ENCODE measurements at regions of chrX and their contacts with region 1.

Region 1: GRCh38 chrX:11787564-11787963 is 29.5 kb downstream of the MSL3 start:
- DNase-seq: peak; percentile 79
- ATAC-seq: peak; percentile 80
- H3K4me3 Mint-ChIP-seq: peak overlapping the region; percentile 56
- H3K27ac Mint-ChIP-seq: no peak overlapping the region
- H3K4me1 Mint-ChIP-seq: peaks cover 32% of the 10 kb centered on the region
- H3K27me3 Mint-ChIP-seq: no peaks in the 10 kb centered on the region

Region 2: DNA sequence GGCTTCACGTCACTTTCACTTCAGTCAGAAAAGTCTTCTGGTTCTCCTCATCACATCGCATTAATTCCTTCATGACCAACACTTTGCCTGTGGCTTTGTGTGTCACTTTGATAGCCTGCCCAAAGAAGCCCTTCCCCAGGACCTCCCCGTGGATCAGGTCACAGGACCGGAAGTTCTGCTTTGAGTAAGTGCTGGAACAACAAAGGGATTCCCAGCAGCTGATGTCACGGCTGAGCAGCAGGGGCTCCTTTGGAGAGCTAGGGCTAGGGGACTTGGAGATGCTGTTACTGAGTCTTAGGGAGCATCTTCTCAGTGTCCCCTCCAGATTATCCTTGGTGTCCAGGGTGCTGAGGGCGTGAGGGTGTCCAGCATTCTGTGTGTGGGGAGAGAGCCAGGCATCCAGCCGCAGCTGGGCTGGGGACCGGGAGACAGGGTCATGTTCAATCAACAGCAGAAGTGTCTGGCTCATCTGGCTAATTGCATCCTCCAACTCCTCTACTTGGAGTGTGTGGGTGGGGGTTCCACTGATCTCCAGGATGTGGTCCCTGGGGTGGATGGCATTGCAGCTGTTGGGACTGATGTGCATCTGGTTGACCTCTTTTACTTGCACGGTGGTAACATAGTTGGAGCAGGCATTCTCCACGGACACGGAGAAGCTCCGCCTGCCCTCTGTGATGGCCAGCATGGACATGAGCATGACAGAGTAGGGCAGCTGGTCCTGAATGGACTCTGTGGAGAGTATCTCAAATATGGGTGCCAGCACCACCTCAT is 82.7 kb before region 1 on chrX:
- CTCF ChIA-PET with region 1: no interaction called
- POLR2A ChIA-PET with region 1: no interaction called
- DNase-seq: no peak
- ATAC-seq: no peak
- H3K4me3 Mint-ChIP-seq: no peak overlapping the region
- H3K27ac Mint-ChIP-seq: no peak overlapping the region
- H3K4me1 Mint-ChIP-seq: no peaks in the 10 kb centered on the region
- H3K27me3 Mint-ChIP-seq: no peaks in the 10 kb centered on the region

Region 3: DNA sequence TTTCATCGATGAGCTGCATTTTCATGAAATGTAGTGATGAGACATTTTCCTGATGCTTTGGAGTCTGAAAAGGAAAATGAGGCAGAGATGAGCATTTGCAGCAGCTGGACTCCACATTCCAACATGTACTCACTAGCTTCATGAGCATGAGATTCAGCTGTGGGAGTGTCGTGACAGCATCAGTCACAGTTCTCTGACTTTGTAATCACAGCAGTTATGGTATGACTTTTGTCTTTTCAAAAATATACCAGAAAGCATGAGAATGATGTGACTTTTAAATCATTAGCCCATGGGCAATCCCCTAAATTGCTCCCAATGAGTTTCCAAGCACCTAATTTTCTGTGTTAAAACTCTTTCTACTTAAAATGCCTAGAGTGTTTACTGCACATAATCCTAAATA is 47.8 kb before region 1 on chrX:
- CTCF ChIA-PET with region 1: no interaction called
- POLR2A ChIA-PET with region 1: no interaction called
- DNase-seq: no peak
- ATAC-seq: no peak
- H3K4me3 Mint-ChIP-seq: no peak overlapping the region
- H3K27ac Mint-ChIP-seq: no peak overlapping the region
- H3K4me1 Mint-ChIP-seq: no peaks in the 10 kb centered on the region
- H3K27me3 Mint-ChIP-seq: no peaks in the 10 kb centered on the region

Region 4: GRCh38 chrX:11836284-11836683 is 48.7 kb after region 1 on chrX:
- CTCF ChIA-PET with region 1: no interaction called
- POLR2A ChIA-PET with region 1: no interaction called
- DNase-seq: no peak
- ATAC-seq: no peak
- H3K4me3 Mint-ChIP-seq: no peak overlapping the region
- H3K27ac Mint-ChIP-seq: no peak overlapping the region
- H3K4me1 Mint-ChIP-seq: peaks cover 11% of the 10 kb centered on the region
- H3K27me3 Mint-ChIP-seq: no peaks in the 10 kb centered on the region

Region 5: DNA sequence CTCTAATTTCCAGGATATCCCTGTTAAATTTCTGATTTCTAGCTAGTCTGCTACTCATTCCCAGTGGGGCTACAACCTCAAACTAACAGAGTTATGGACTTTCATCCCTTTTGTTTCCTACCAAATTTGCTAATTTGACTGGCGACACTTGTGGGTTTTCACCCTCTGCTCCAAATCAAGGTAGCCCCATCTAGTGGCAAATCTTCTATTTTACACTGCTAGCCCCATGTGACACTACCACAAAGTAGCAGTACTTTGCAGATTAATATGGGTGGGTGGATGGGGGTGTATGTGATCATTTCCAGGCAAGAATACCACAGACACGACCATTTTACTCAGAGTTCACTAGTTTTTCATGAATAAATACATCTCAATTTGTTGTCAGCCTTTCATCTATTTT is 120.8 kb after region 1 on chrX:
- CTCF ChIA-PET with region 1: interaction called, 15 read pairs
- POLR2A ChIA-PET with region 1: no interaction called
- DNase-seq: peak; percentile 37
- ATAC-seq: peak; percentile 73
- H3K4me3 Mint-ChIP-seq: no peak overlapping the region
- H3K27ac Mint-ChIP-seq: no peak overlapping the region
- H3K4me1 Mint-ChIP-seq: no peaks in the 10 kb centered on the region
- H3K27me3 Mint-ChIP-seq: no peaks in the 10 kb centered on the region